ENCODE measurements at regions of chr9 and their contacts with region 1.

Region 1: DNA sequence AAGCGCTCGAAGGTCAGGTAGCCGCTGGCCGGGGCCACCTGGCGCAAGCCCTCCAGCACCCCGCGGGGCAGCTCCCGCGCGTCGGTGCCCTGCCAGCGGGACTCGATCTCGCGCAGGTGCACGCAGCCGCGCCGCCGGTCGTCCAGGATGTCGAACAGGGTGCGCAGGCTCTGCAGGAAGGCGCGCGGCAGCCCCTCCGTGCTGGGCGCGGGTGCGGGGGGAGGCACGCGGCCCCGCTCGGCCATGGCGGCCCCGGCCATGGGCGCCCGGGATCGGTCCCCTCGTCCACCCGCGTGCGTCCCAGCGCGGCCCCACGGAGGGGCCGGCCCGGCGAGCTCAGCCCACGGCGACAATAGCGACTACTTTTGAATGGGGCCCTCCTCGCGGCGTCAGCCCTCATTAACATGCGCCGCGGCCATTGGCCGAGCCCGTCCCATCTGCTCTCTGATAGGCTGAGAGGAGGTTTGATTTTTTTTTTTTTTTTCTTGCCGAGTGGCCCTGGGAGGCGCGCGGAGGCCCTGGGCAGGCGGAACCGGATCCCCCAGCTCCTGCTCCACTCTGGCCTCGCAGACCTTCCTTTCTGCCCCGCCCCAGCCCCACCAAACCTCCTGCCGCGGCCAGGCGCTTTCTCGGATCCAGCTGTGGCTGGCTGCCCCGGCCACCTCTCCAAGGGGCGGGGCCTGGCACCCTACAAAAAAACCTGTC is at the start of gene SAPCD2:
- DNase-seq: peak; percentile 92
- H3K4me3 Mint-ChIP-seq: peak within 1 kb of the TSS; percentile 82
- H3K27ac Mint-ChIP-seq: peak within 1 kb of the TSS; percentile 91
- H3K4me1 Mint-ChIP-seq: peaks cover 28% of the 10 kb centered on the region
- H3K27me3 Mint-ChIP-seq: no peaks in the 10 kb centered on the region
- total RNA-seq, gene SAPCD2: 33.8 to 40.6 TPM

Region 2: DNA sequence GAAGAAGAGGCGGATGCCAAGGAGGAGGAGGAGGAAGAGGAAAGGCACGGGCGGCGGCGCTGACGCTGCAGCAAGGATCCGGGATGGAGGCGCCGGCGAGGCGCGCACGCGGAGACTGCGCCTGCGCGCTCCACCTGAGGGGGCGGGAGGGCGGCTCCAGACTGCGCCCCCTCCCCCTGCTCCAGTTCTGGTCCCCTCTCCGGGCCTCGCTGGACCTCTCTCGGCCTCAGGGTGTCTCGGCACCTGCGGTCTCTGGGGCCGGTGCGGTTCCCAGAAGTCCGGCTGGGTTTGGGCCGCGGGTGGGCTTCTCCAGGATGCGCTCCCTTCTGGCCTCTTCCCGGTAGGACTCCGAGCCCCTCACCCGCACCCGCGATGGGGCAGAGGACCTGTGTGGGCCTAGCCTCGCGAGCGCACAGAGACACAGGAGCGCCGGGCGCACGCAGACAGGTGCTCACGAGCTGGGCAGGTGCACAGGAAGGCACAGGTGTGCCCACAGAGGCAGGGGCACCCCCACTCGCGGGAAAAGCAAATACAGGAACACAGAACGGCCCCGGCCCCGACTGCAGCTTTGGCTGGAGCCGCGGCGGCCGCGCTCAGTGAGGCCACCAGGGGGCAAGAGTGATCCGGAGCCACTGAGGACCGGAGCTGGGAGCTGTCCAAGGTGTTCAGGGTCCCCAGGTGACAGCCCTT is 24.1 kb before region 1 on chr9 and contains the start of gene NPDC1:
- CTCF ChIA-PET with region 1: interaction called, 157 read pairs
- POLR2A ChIA-PET with region 1: interaction called, 3 read pairs
- DNase-seq: peak; percentile 86
- H3K4me3 Mint-ChIP-seq: peak within 1 kb of the TSS; percentile 70
- H3K27ac Mint-ChIP-seq: peak within 1 kb of the TSS; percentile 54
- H3K4me1 Mint-ChIP-seq: peaks cover 19% of the 10 kb centered on the region
- H3K27me3 Mint-ChIP-seq: peaks cover 32% of the 10 kb centered on the region
- total RNA-seq, gene NPDC1: 35.5 to 41.4 TPM

Region 3: DNA sequence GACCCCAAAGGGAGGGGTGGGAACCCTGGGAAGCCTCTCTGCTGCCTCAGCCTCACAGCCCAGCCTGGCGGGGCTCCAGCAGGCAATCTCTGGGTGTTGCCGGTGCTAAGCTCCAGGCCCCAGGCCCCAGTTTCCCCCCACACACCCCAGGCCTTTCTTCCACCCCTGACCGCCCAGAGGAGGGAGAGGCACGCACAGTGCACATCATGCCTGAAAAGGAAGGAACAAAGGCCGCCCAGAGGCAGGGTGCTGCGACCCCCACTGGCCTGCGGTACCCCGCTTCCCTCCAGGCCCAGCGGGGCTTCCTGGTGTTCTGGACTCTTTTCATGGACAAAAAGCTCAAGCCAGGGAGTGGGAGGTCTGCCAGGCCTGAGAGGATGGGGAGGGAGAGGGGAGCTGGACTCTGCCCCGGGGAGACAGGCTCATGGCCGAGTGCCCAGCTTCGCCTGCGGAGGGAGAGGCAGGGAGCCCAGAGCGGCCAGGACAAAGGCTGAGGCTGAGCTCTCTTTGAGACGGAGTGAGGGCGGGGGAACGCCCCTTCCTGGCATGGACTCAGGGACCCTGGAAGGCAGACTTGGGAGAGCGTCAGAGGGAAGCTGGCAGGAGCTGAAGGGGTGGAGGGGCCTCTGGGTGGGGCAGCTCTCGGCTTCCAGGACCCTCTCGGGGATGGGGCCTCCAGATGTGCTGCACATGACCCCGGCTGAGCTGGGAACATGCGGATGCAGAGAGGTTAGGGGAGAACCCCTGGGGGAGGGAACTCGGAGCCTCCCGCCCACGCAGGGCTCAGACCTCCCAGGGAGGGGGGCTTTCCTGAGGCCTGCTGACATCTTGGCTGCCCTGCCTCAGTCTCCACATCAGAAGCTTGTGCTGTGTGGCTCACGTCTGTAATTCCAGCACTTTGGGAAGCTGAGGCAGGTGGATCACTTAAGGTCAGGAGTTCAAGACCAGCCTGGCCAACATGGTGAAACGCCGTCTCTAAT is 14.7 kb before region 1 on chr9:
- CTCF ChIA-PET with region 1: interaction called, 13 read pairs
- POLR2A ChIA-PET with region 1: no interaction called
- DNase-seq: no peak
- H3K4me3 Mint-ChIP-seq: no peak overlapping the region
- H3K27ac Mint-ChIP-seq: no peak overlapping the region
- H3K4me1 Mint-ChIP-seq: no peaks in the 10 kb centered on the region
- H3K27me3 Mint-ChIP-seq: peaks cover 13% of the 10 kb centered on the region

Region 4: GRCh38 chr9:137086531-137087408 is 16.4 kb after region 1 on chr9 and contains the start of gene MAN1B1:
- CTCF ChIA-PET with region 1: interaction called, 12 read pairs
- POLR2A ChIA-PET with region 1: interaction called, 16 read pairs
- DNase-seq: peak; percentile 100
- H3K4me3 Mint-ChIP-seq: peak within 1 kb of the TSS; percentile 85
- H3K27ac Mint-ChIP-seq: peak within 1 kb of the TSS; percentile 97
- H3K4me1 Mint-ChIP-seq: peaks cover 44% of the 10 kb centered on the region
- H3K27me3 Mint-ChIP-seq: no peaks in the 10 kb centered on the region
- total RNA-seq, gene MAN1B1: 43.0 to 55.0 TPM

Region 5: GRCh38 chr9:137095664-137096517 is 25.5 kb after region 1 on chr9:
- CTCF ChIA-PET with region 1: interaction called, 10 read pairs
- POLR2A ChIA-PET with region 1: interaction called, 3 read pairs
- DNase-seq: peak; percentile 92
- H3K4me3 Mint-ChIP-seq: peak overlapping the region; percentile 75
- H3K27ac Mint-ChIP-seq: peak overlapping the region; percentile 96
- H3K4me1 Mint-ChIP-seq: peaks cover 21% of the 10 kb centered on the region
- H3K27me3 Mint-ChIP-seq: no peaks in the 10 kb centered on the region

Measured in activated CD4-positive, alpha-beta T cell treated with anti-CD3 and anti-CD28 coated beads, Interleukin-2, amount 10 ng/mL, durations not matched to agents 7 days and 5 days (primary cell).